GM13977 (cell line): ENCODE measurements at regions of chr6 and their contacts with region 1.

Region 1: GRCh38 chr6:153032255-153032882 is 29.9 kb upstream of the MTRF1L start:
- DNase-seq: no peak
- CTCF ChIP-seq: peak; percentile 57

Region 2: GRCh38 chr6:153312641-153313040 is 280.3 kb after region 1 on chr6:
- in situ Hi-C with region 1: loop called (anchors 25 kb)
- DNase-seq: peak; percentile 20
- CTCF ChIP-seq: peak; percentile 70

Region 3: DNA sequence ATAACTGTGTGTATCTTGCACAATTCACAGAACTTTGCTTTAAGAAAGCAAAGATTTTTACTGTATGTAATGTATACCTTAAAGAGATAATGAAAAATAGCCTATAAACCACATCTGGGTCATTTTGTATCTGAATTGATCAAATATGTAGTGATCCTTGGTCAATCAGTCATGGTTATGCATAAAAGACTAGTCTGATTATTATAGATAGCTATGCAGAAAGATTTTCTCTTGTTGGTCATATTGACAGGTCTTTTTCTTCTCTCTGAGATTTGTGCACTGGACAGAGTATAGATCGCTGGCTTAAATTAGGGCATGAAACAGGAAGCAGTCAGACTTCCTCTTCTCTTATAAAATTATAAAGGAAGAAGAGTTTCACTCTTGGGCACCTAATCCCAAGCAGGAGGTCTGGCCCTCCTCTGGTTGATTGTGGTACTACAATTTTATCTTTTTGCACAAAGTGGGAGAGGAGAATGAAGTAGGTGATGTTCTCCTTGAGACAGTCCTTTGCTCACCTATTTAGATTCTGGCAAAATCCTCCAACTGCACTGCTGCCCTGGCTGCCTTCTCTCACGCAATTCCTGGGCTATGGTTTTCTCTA is 479.6 kb after region 1 on chr6:
- in situ Hi-C with region 1: loop called (anchors 25 kb)
- DNase-seq: peak; percentile 8
- CTCF ChIP-seq: peak; percentile 72